Vagina (tissue), 2 donors: ENCODE measurements at regions of chr1 and their contacts with region 1.

Region 1: DNA sequence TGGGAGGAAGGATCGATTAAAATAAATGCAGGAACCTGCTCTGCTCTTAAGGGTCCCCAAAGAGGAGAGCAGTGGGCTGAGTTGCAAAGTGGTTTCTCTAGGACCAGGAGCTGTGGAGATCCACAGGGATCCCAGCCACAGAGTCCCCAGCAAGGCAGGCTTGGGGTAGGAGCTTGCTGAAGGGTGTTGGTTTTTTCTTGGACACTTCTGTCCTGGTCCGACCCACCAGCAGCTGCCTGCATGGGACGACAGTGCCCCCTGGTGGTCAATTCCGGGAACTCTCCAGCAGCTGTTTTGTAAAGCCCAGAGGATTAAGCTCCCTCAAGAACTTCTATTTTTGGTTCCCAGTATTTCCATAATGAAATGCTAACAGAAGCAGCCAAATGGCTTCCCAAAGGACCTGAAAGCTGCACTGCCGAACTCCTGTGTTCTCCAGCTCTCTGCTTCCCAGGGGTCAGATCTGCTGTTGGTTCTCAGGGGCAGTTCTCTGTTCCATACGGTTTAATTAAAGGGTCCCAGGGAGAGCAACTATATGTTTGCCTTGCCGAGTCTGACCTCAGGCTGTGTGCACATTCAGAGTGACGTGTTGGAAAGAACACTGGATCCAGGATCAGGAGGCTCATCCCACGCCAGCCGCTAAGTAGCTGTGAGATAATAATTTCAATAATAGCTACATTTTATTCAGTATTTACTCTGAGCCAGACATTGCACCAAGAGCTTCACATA is 23.2 kb downstream of the NENF start:
- DNase-seq: no peak
- H3K4me3 ChIP-seq: no peak overlapping the region
- H3K27ac ChIP-seq: peak overlapping the region; percentile 28
- H3K4me1 ChIP-seq: peaks cover 14% of the 10 kb centered on the region
- H3K27me3 ChIP-seq: no peaks in the 10 kb centered on the region
- CTCF ChIP-seq: peak; percentile 96 to 99 (median 98)
- POLR2A ChIP-seq: no peak

Region 2: GRCh38 chr1:212284744-212285684 is 171.0 kb before region 1 on chr1 and contains the start of gene PPP2R5A:
- intact Hi-C with region 1: loop called (anchors 5 kb)
- DNase-seq: peak; percentile 99 to 100
- H3K4me3 ChIP-seq: peak within 1 kb of the TSS; percentile 73 to 92
- H3K27ac ChIP-seq: peak within 1 kb of the TSS; percentile 98
- H3K4me1 ChIP-seq: peaks cover 29% of the 10 kb centered on the region
- H3K27me3 ChIP-seq: no peaks in the 10 kb centered on the region
- CTCF ChIP-seq: peak in 1 of 3 experiments; percentile 27
- POLR2A ChIP-seq: peak in 1 of 2 donors; percentile 96
- total RNA-seq, gene PPP2R5A: 33.9 TPM